ENCODE measurements at regions of chr12 and their contacts with region 1.

Region 1: DNA sequence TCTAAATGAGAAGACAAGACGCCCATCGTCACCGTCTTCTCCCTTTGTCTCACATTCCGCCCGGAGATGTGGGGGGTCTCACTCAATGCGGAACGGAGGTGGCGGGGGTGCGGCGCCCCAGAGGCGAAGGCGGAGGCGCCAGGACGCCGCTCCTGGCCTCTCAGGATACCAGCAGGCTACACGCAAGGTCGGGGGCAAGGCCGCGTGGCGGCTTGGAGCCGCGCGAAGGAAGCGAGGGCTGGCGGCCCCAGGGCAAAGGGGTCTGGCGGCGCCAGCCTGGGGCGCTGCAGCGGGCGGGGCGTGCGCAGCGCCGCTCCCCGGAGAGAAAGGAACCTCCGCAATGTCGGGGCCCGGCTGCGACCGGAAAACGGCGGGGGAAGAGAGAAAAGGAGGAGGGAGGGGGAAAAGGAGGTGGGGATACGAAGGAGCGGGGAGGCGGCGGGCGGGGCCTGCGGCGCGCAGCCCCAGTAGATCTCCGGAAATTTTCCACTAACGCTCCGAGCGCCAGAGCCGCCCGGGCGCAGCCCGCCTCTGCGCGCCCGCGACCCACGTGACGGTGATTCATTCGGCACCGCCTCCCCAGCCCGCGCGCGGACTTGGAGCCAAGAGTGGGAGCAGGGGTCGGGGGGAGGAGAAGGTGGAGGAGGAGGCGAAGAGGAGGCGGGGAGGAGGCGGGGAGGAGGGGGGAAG is 10.5 kb upstream of the SLC38A2 start:
- DNase-seq: peak; percentile 86 to 98 (median 87)
- ATAC-seq: peak; percentile 87
- H3K4me3 ChIP-seq: peak overlapping the region; percentile 65
- H3K27ac ChIP-seq: peak overlapping the region; percentile 97
- H3K4me1 ChIP-seq: peaks cover 16 to 58% of the 10 kb centered on the region in 2 experiments
- H3K27me3 ChIP-seq: no peaks in the 10 kb centered on the region
- CTCF ChIP-seq: peak in 2 of 3 experiments; percentile 45 to 61; a peak in 4 of 6 replicates
- EP300 ChIP-seq: peak; percentile 60; the same call in 1 of the 2 replicates
- POLR2A ChIP-seq: peak; percentile 80
- RAD21 ChIP-seq: peak; percentile 35 to 40; a peak in 3 of 4 replicates

Region 2: DNA sequence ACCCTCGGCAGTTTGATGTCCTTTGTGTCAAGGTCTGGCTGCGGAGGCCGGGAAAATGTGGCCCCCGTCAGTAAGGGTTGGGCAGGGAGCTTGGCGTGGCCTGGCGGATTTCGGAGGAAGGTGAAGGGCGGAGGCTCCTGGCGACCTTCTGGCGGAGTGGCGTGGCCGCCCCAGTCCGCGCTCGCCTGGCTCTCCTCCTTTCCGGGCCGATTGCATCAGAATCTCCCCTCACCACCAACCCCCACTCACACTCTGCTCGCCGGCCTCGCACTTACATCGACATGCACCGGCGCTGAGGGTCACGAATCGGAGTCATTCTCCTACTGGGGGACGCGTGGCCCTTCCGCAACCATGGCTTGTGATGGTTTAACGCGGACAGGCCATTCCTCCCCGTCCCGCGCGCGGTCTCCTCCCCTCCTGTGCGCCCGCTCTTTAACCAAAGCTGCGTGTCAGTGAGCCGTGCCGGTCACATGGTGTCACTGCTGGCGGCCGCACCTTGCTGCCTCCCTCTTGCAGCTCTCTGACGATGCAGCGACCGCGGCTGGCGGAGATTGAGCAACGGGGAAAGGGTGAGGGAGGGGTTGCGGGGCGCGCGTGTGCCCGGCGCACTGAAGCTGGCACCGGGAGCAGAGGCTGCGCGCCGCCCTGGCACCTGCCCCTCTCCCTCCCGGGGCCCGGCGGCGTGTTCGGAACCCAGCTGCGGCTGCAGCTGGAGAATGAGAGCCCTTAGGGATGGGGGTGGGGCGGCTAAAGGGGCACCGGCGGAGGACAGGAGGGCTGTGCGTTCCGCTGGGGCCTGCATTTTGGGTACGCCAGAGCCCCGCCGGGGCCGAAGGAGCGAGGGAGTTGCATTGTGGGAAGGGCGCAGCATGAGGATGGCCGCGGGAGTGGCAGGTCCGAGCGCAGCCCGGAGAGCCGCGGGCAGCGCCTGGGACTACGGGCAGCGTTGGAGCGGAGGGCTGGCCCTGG is 114.2 kb before region 1 on chr12 and contains the start of gene SLC38A1:
- CTCF ChIA-PET with region 1: no interaction called
- POLR2A ChIA-PET with region 1: no interaction called
- in situ Hi-C with region 1: no loop called
- intact Hi-C with region 1: loop called (anchors 5 kb)
- DNase-seq: peak; percentile 78 to 88 (median 80)
- ATAC-seq: peak; percentile 87
- H3K4me3 ChIP-seq: peak within 1 kb of the TSS; percentile 83
- H3K27ac ChIP-seq: peak within 1 kb of the TSS; percentile 96
- H3K4me1 ChIP-seq: peaks cover 19 to 33% of the 10 kb centered on the region in 2 experiments; a peak in 4 of 5 replicates
- H3K27me3 ChIP-seq: no peaks in the 10 kb centered on the region
- CTCF ChIP-seq: 0 out of 6 replicates have a peak, but pooled peaks of 2 of the 3 experiments have one; percentile 12 to 14
- EP300 ChIP-seq: peak; percentile 56
- POLR2A ChIP-seq: peak; percentile 88
- RAD21 ChIP-seq: peak in 1 of 2 experiments; percentile 29
- polyA plus RNA-seq, gene SLC38A1: 51.9 to 75.0 TPM

Region 3: GRCh38 chr12:46372544-46373110 is 10.5 kb before region 1 on chr12 and contains the start of gene SLC38A2:
- CTCF ChIA-PET with region 1: no interaction called
- POLR2A ChIA-PET with region 1: interaction called, 26 read pairs
- in situ Hi-C with region 1: no loop called
- intact Hi-C with region 1: loop called (anchors 1 kb)
- DNase-seq: peak; percentile 94 to 97 (median 96)
- ATAC-seq: peak; percentile 90
- H3K4me3 ChIP-seq: peak within 1 kb of the TSS; percentile 74
- H3K27ac ChIP-seq: peak within 1 kb of the TSS; percentile 88
- H3K4me1 ChIP-seq: peaks cover 16 to 45% of the 10 kb centered on the region in 2 experiments
- H3K27me3 ChIP-seq: no peaks in the 10 kb centered on the region
- CTCF ChIP-seq: 0 out of 6 replicates have a peak, but pooled peaks of 1 of the 3 experiments have one; percentile 0
- EP300 ChIP-seq: no peak
- POLR2A ChIP-seq: peak; percentile 99
- RAD21 ChIP-seq: peak in 1 of 2 experiments; percentile 6; a peak in 1 of 4 replicates
- polyA plus RNA-seq, gene SLC38A2: 98.7 to 132 TPM

Region 4: DNA sequence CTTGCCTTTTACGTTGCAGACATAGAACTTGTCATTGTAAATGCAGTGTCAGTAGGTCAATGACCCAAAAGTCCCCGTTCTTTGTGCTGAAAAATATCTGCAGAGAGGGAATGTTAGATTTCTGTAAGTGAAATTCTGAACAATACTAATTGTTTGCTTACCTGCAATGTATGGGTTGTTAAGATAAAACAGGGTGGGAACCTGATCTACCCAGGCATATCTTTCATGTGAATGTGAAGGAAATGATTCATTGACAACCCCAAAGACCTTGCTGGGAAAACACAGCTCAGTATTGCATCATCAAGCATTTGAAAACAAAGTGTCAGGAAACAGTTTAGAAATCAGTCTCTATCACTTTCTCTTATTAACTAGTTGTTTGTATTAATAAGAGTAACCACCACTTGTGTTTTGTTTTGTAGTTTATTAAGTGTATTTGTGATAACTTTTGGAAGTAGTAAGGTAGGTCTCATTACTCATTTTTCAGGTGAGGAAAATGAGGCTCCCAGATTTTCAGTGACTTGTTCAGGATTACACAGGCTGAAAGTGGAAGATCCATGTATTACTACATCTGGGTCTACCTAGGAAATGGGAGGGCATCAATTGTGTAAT is 47.3 kb after region 1 on chr12:
- CTCF ChIA-PET with region 1: no interaction called
- POLR2A ChIA-PET with region 1: interaction called, 3 read pairs
- in situ Hi-C with region 1: no loop called
- intact Hi-C with region 1: loop called (anchors 1 kb)
- DNase-seq: peak; percentile 24 to 77 (median 47)
- ATAC-seq: peak; percentile 79
- H3K4me3 ChIP-seq: no peak overlapping the region
- H3K27ac ChIP-seq: peak overlapping the region; percentile 59
- H3K4me1 ChIP-seq: peaks cover 13 to 37% of the 10 kb centered on the region in 2 experiments
- H3K27me3 ChIP-seq: no peaks in the 10 kb centered on the region
- CTCF ChIP-seq: no peak
- EP300 ChIP-seq: peak; percentile 96
- POLR2A ChIP-seq: no peak
- RAD21 ChIP-seq: no peak; a peak in 2 of 4 replicates

Region 5: DNA sequence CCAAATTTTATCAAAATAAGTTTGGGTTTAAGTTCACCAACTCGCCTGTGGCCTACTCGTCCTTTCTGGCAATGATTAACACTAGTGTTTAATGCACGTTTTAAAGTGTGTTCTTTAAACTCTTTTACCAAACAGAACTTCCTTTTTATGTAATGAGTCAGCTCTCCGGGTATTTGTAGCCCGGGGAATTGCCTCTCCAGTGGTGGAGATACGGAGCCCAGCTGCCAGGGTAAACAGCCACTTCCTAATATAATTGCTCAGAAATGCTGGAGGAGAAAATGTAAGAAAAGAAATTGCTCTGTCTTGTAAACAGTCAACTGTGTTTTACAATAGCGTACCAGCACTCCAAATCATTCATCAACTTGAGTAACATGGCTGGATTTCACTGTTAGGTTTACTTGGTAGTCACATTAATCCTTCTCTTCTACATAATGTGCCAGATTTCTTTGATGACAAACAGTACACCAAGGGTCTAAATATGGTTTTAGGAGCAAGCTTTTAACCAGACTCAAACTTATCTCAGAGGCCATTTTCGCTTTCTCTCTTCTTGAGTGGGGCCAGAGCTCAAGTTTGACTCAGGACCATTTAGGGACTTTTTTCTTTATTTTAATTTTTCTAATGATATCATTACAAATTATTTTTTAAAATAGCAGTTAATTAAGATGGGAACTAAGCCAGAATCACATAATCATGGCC is 90.7 kb after region 1 on chr12:
- CTCF ChIA-PET with region 1: no interaction called
- POLR2A ChIA-PET with region 1: no interaction called
- in situ Hi-C with region 1: no loop called
- intact Hi-C with region 1: loop called (anchors 5 kb)
- DNase-seq: peak in 2 of 4 experiments; percentile 56 to 57
- ATAC-seq: peak; percentile 80
- H3K4me3 ChIP-seq: no peak overlapping the region
- H3K27ac ChIP-seq: peak overlapping the region; percentile 74
- H3K4me1 ChIP-seq: peaks cover 0 to 22% of the 10 kb centered on the region in 2 experiments; a peak in 3 of 5 replicates
- H3K27me3 ChIP-seq: no peaks in the 10 kb centered on the region
- CTCF ChIP-seq: no peak
- EP300 ChIP-seq: no peak; the same call in 1 of the 2 replicates
- POLR2A ChIP-seq: no peak
- RAD21 ChIP-seq: 0 out of 4 replicates have a peak, but pooled peaks have one; percentile 6 to 7

Region 6: DNA sequence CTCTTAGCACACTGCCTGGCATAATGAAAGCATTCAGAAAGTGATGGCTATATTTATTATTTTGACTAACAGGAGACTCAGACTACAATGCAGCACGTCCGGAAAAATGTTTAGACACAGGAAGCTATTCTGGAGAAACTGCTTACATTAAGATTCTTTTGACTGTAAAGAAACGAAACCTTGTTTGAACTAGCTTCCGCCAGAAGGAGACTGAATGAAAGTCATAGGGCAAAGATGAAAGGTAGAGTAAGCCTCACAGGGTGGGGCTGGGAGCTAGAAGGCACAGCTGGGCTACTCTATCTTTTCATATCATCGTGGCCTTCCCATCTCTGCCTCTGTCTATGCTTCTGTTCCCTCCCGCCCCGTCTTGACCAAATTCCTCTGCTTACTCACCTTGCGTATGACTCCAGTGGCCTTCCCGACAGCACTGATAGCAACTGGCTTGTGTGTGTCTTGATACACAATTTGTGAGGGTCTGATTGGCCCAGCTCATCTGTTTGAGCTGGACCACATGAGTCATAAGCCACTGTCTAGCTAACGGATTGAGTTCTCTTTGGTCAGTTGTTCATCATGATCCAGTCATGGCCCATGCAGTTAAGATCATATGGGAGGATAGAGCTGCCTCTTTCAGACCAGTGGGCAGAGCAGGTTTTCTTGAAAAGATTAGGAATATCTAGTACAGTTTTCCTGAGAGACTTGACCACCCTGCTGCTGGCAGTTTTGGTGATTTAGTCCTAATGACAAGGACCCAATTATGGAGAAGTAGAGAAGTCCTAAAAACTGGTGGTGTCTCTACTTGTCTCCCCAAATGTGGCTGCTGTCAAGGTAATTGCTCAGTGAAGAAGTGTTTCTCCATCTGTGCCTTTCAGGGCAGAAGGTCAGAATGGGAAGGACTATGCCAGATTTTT is 141.0 kb after region 1 on chr12:
- CTCF ChIA-PET with region 1: no interaction called
- POLR2A ChIA-PET with region 1: no interaction called
- in situ Hi-C with region 1: no loop called
- intact Hi-C with region 1: loop called (anchors 10 kb)
- DNase-seq: peak; percentile 29 to 86 (median 43)
- ATAC-seq: peak; percentile 83
- H3K4me3 ChIP-seq: no peak overlapping the region
- H3K27ac ChIP-seq: peak overlapping the region; percentile 49; the same call in 1 of the 3 replicates
- H3K4me1 ChIP-seq: peaks cover 0 to 22% of the 10 kb centered on the region in 2 experiments; a peak in 4 of 5 replicates
- H3K27me3 ChIP-seq: no peaks in the 10 kb centered on the region
- CTCF ChIP-seq: no peak
- EP300 ChIP-seq: peak; percentile 76; the same call in 1 of the 2 replicates
- POLR2A ChIP-seq: no peak
- RAD21 ChIP-seq: peak in 1 of 2 experiments; percentile 28; a peak in 1 of 4 replicates

Region 7: DNA sequence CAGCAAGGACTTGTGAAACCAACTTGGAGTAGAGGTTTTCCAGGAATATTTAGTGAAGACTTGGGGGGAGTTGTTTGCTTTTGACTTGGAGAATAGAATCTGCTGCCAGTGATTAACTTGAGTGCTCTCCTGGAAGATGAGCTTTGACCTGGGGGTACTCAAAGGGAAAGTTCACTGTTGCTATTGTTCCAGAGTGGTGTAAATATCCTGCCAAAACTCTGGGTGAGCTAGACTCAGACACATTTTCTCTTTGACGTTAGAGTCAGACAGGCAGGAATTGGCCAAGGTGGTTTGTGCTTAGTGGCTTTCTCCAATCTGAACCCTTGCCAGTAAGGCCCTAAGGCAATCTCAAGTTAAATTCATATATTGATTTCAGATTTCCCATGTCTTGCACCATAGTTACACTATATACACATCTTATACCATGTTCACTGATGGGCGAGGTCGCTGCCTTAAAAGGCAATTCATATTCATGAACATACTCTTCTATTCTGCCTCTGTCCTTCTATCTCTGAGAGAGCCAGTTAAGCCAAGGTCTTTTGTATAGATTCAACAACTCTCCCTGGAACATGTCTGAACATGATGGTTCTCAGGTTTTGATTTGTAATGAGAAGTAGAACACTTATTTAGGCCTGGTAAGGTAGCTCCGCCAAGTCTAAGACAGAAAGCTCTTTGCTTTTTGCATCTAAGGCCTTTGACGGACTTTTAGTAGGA is 194.1 kb after region 1 on chr12:
- CTCF ChIA-PET with region 1: no interaction called
- POLR2A ChIA-PET with region 1: no interaction called
- in situ Hi-C with region 1: no loop called
- intact Hi-C with region 1: no loop called
- DNase-seq: no peak
- ATAC-seq: no peak
- H3K4me3 ChIP-seq: no peak overlapping the region
- H3K27ac ChIP-seq: no peak overlapping the region
- H3K4me1 ChIP-seq: no peaks in the 10 kb centered on the region; a peak in 1 of 5 replicates
- H3K27me3 ChIP-seq: no peaks in the 10 kb centered on the region
- CTCF ChIP-seq: no peak
- EP300 ChIP-seq: no peak
- POLR2A ChIP-seq: no peak
- RAD21 ChIP-seq: no peak

Region 8: GRCh38 chr12:46661110-46661845 is 278.2 kb after region 1 on chr12:
- CTCF ChIA-PET with region 1: no interaction called
- POLR2A ChIA-PET with region 1: interaction called, 3 read pairs
- in situ Hi-C with region 1: no loop called
- intact Hi-C with region 1: loop called (anchors 1 kb)
- DNase-seq: peak in 2 of 4 experiments; percentile 40 to 67
- ATAC-seq: peak; percentile 94
- H3K4me3 ChIP-seq: no peak overlapping the region
- H3K27ac ChIP-seq: no peak overlapping the region; the same call in 2 of the 3 replicates
- H3K4me1 ChIP-seq: peaks cover 0 to 18% of the 10 kb centered on the region in 2 experiments; a peak in 3 of 5 replicates
- H3K27me3 ChIP-seq: no peaks in the 10 kb centered on the region
- CTCF ChIP-seq: peak; percentile 63 to 85 (median 74)
- EP300 ChIP-seq: no peak
- POLR2A ChIP-seq: no peak
- RAD21 ChIP-seq: peak; percentile 90 to 96

Measured in K562 (cell line).